MCF 10A (cell line): ENCODE measurements at regions of chr6 and their contacts with region 1.

Region 1: GRCh38 chr6:45138765-45139164 is 189.4 kb upstream of the RUNX2 start:
- DNase-seq: no peak
- H3K4me3 Mint-ChIP-seq: no peak overlapping the region
- H3K27ac Mint-ChIP-seq: no peak overlapping the region
- H3K4me1 Mint-ChIP-seq: peaks cover 6% of the 10 kb centered on the region
- H3K27me3 Mint-ChIP-seq: no peaks in the 10 kb centered on the region
- CTCF ChIP-seq: no peak

Region 2: GRCh38 chr6:44580901-44581300 is 557.9 kb before region 1 on chr6:
- CTCF ChIA-PET with region 1: no interaction called
- POLR2A ChIA-PET with region 1: no interaction called
- intact Hi-C with region 1: no loop called
- DNase-seq: no peak
- H3K4me3 Mint-ChIP-seq: no peak overlapping the region
- H3K27ac Mint-ChIP-seq: no peak overlapping the region
- H3K4me1 Mint-ChIP-seq: no peaks in the 10 kb centered on the region
- H3K27me3 Mint-ChIP-seq: no peaks in the 10 kb centered on the region
- CTCF ChIP-seq: no peak

Region 3: DNA sequence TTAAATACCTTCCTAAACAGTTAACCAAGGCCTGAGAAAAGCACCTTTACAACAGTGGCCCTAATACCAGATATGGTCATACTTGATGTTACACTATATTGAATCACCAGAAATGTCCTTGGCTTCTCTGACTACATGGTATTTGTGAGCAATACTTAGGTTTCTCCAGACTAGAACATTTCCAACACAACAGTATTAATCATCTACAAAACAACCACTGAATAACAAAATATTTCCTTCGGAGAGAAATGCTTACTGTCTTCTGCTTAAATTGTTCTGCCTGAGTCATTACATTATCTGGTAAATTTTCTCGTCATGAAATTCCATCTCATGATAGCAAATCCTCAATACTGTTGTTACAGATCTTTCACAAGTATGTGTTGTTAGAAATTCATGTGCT is 63.5 kb before region 1 on chr6:
- CTCF ChIA-PET with region 1: no interaction called
- POLR2A ChIA-PET with region 1: no interaction called
- intact Hi-C with region 1: no loop called
- DNase-seq: peak; percentile 74
- H3K4me3 Mint-ChIP-seq: peak overlapping the region; percentile 28
- H3K27ac Mint-ChIP-seq: peak overlapping the region; percentile 89
- H3K4me1 Mint-ChIP-seq: peaks cover 26% of the 10 kb centered on the region
- H3K27me3 Mint-ChIP-seq: no peaks in the 10 kb centered on the region
- CTCF ChIP-seq: no peak

Region 4: DNA sequence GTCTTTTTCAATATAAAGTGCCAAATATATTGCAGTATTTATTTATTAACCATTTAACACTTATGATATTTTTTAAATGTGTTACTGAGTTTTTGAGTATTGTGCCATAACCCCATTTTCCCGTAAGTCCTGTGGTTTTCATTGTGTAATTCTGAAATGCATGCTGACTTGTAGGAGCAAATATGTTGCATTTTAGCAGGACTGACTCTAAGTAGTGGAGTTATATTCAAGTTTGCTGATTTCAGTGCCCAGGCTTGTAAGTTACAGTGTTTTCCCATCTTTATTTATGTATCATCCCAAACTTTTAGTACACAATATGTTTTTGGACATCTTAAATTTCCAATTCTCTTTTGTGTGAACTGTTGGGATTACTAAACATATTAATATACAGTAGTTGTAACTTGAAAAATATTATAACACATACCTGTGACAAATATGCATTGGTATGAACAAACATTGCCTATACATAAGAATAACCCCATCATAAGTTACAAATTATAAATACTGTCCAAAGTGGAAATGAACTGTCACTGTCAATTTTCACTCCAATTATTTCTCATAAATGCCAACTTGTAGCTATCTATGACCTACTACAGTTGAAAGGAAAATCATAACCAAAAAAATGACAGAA is 10.1 kb after region 1 on chr6:
- CTCF ChIA-PET with region 1: no interaction called
- POLR2A ChIA-PET with region 1: no interaction called
- intact Hi-C with region 1: loop called (anchors 1 kb)
- DNase-seq: peak; percentile 42
- H3K4me3 Mint-ChIP-seq: no peak overlapping the region
- H3K27ac Mint-ChIP-seq: peak overlapping the region; percentile 22
- H3K4me1 Mint-ChIP-seq: peaks cover 6% of the 10 kb centered on the region
- H3K27me3 Mint-ChIP-seq: no peaks in the 10 kb centered on the region
- CTCF ChIP-seq: no peak